HCT116 (cell line): ENCODE measurements at regions of chr12 and their contacts with region 1.

Region 1: DNA sequence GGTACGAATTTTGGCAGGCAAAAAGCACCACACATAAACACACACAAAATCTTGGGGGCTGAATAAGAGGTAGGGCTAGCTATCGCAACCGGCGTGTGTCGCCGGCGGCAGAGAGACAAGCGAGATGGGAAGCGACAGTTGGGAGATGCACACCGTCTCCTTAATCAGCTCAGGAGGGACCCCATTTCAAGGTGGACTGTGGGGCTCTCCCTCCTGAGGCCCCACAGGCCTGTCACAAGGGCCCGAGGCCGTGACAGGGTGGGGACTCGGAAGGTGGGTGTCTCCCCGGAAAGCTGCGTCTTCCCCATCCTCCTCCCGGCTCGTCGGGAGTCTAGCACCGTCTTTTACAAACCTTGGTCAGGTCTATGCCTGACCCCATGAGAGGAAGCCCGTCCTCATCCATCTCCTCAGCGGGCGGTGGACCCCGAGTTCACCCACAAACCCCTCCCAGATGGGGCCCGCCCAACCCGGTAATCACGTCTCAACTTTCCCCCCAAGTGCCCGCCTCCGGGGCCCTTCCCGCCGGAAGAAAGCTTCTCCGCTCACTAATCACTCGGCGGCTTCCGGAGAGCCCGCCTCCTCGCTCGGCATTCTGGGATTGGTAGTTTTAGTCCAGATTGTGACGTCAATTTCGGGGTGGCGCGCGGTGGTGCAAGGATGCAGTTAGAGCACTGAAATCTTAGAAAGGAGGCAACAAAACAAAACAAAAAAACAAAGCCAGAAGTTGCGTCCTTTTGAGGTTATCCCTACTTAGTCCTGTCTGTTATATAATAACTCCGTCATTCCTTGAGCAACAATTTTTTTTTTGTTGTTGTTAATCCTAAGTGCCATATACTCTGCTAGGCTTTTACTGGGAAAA is at the start of gene WASHC3:
- DNase-seq: peak; percentile 82
- ATAC-seq: peak; percentile 96
- H3K4me3 ChIP-seq: peak within 1 kb of the TSS; percentile 80 to 82
- H3K27ac ChIP-seq: peak within 1 kb of the TSS; percentile 4; the same call in 1 of the 2 replicates
- H3K4me1 ChIP-seq: peaks cover 0 to 15% of the 10 kb centered on the region in 2 experiments; a peak in 3 of 4 replicates
- H3K27me3 ChIP-seq: no peaks in the 10 kb centered on the region
- CTCF ChIP-seq: no peak
- POLR2A ChIP-seq: no peak
- RAD21 ChIP-seq: no peak
- total RNA-seq, gene WASHC3: 15.6 TPM

Region 2: DNA sequence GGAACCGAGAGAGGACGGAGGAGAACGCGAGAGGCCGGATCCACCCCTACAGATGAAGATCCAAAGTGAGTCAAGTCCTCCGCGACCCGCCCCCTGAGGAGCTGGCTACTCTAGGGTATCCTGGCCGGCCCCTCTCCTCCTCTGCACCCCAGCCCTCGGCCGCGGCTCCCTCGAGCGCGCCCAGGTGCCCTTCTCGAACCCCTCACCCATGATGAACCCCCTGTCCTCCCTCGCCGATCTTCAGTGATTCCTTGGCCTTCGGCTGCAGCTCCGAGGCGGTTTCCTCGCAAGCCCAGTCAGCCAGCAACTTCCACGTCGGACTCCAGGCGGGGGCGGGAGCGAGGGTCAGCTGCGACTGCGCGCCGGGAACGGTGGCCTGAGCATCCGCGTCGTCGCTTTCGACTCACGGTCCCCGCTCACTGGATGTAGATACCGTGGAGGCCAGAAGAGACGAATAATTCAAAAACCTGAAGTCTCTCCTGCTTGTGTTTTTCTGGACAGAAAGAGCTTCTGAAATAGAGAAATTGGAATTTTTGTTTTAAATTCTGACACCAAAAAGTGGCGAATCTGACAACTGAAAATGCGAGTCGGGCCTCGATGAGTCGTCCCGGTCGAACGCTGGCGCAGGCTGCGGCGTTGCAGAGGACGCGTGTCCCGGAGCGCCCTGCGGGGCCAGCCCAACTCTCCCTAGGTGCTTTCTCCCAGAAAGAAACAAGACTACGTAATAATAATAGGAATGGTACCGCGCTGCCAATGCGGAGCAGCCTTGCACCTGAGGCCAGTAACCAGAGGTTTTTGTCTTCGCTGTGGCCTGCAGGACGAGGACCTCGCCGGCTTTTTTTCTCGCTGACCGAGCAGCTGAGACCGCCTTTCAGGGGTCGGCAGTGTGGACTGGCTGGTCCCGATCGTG is 654.1 kb before region 1 on chr12 and contains the start of gene ARL1:
- CTCF ChIA-PET with region 1: no interaction called
- POLR2A ChIA-PET with region 1: no interaction called
- RAD21 ChIA-PET with region 1: no interaction called
- intact Hi-C with region 1: loop called (anchors 5 kb)
- DNase-seq: peak; percentile 77
- ATAC-seq: peak; percentile 83
- H3K4me3 ChIP-seq: peak within 1 kb of the TSS; percentile 84 to 98
- H3K27ac ChIP-seq: peak within 1 kb of the TSS; percentile 93
- H3K4me1 ChIP-seq: peaks cover 22 to 31% of the 10 kb centered on the region in 2 experiments
- H3K27me3 ChIP-seq: no peaks in the 10 kb centered on the region
- CTCF ChIP-seq: no peak
- POLR2A ChIP-seq: peak; percentile 82
- RAD21 ChIP-seq: no peak
- total RNA-seq, gene ARL1: 76.0 TPM

Region 3: DNA sequence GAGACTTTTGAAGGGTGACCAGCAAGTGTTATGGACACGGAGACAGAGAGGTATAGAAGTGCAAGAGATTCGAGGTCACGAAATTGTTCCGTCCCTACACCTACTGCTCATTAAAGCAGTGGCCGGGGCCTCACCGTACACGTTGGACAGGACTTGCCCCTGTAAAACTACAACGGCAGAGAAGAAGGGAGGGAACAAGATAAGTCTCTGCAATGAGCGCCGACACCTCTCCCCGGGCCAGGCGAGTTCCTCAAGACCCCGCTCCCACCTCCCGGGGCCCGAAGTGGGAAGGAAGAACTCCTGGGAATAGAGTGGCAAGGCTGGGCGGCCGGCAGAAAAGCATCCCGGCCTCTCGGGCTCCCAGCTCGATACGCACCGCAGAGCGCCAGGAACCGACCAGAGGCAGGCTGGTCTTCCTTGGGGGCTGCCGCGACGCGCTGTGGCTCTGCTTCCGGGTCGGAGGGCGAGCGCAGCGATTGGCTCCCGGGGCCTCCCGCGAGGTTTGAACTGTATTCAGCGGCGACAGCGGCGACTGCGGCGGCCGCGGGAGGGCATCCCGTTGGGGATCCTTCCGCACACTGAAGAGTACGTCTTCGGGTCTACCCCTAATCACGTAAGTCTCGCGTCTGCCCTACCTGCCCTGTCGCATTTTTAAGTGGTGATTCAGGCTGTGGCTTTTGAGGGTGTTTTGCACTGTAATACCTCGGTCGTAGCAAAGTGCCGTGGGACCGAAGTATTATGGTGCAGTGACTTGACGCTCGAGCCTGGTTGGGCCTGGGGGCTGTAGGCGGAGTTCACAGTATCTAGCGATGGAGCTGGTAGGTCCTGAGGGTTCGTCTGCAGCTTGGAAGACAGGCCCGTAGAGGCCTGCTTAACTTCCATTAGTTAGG is 58.1 kb after region 1 on chr12 and contains the starts of genes NUP37 and PARPBP:
- CTCF ChIA-PET with region 1: no interaction called
- POLR2A ChIA-PET with region 1: no interaction called
- RAD21 ChIA-PET with region 1: no interaction called
- intact Hi-C with region 1: loop called (anchors 1 kb)
- DNase-seq: peak; percentile 86
- ATAC-seq: peak; percentile 91
- H3K4me3 ChIP-seq: peak within 1 kb of the TSS; percentile 88 to 97
- H3K27ac ChIP-seq: peak within 1 kb of the TSS; percentile 75
- H3K4me1 ChIP-seq: peaks cover 0 to 16% of the 10 kb centered on the region in 2 experiments; a peak in 3 of 4 replicates
- H3K27me3 ChIP-seq: no peaks in the 10 kb centered on the region
- CTCF ChIP-seq: no peak
- POLR2A ChIP-seq: peak; percentile 70
- RAD21 ChIP-seq: no peak
- total RNA-seq, gene NUP37: 77.5 TPM
- total RNA-seq, gene PARPBP: 23.5 TPM